ENCODE measurements at regions of chr2 and their contacts with region 1.

Region 1: DNA sequence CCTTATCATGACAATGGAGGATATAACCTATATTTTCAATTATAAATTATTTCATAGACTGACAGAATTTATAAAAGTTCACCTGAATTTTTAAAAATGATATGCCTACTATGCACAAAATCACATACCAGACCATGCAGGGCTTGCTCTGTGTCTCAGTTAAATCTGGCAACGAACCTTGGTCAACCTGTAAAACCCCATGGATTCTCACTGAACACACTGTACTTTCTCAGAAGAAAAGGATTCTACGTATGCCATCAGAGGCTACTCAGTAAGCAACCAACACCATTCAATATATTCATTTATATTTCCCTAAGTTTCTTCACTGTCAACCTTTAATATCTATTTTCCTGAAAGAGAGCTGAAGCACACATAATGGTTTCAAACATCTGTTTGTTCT is 52.4 kb downstream of the NRXN1 start:
- DNase-seq: no peak
- ATAC-seq: no peak
- H3K4me3 ChIP-seq: no peak overlapping the region
- H3K27ac ChIP-seq: no peak overlapping the region
- H3K4me1 ChIP-seq: no peaks in the 10 kb centered on the region
- H3K27me3 ChIP-seq: no peaks in the 10 kb centered on the region
- CTCF ChIP-seq: no peak

Region 2: DNA sequence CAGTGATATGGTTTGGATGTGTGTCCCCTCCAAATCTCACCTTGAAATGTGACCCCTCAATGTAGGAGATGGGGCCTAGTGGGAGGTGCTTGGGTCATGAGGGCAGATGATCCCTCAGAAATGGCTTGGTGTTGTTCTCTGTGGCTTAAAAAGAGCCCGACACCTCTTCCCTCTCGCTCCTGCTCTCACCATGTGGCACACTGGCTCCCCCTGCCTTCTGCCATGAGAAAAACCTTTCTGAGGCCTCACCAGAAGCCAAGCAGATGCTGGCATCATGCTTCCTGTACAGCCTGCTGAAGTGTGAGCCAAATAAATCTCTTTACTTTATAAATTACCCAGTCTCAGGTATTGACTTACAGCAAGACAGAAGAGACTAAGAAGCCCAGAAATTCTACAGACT is 304.6 kb before region 1 on chr2:
- CTCF ChIA-PET with region 1: interaction called, 12 read pairs
- POLR2A ChIA-PET with region 1: no interaction called
- in situ Hi-C with region 1: no loop called
- intact Hi-C with region 1: no loop called
- DNase-seq: no peak
- ATAC-seq: no peak
- H3K4me3 ChIP-seq: no peak overlapping the region
- H3K27ac ChIP-seq: no peak overlapping the region
- H3K4me1 ChIP-seq: no peaks in the 10 kb centered on the region
- H3K27me3 ChIP-seq: no peaks in the 10 kb centered on the region
- CTCF ChIP-seq: peak; percentile 19

Region 3: GRCh38 chr2:50820176-50820575 is 159.3 kb before region 1 on chr2:
- CTCF ChIA-PET with region 1: no interaction called
- POLR2A ChIA-PET with region 1: no interaction called
- in situ Hi-C with region 1: no loop called
- intact Hi-C with region 1: no loop called
- DNase-seq: no peak
- ATAC-seq: no peak
- H3K4me3 ChIP-seq: no peak overlapping the region
- H3K27ac ChIP-seq: no peak overlapping the region
- H3K4me1 ChIP-seq: no peaks in the 10 kb centered on the region
- H3K27me3 ChIP-seq: no peaks in the 10 kb centered on the region
- CTCF ChIP-seq: no peak

Region 4: GRCh38 chr2:50851886-50852285 is 127.6 kb before region 1 on chr2:
- CTCF ChIA-PET with region 1: no interaction called
- POLR2A ChIA-PET with region 1: no interaction called
- in situ Hi-C with region 1: no loop called
- intact Hi-C with region 1: no loop called
- DNase-seq: no peak
- ATAC-seq: no peak
- H3K4me3 ChIP-seq: no peak overlapping the region
- H3K27ac ChIP-seq: no peak overlapping the region
- H3K4me1 ChIP-seq: no peaks in the 10 kb centered on the region
- H3K27me3 ChIP-seq: no peaks in the 10 kb centered on the region
- CTCF ChIP-seq: no peak

Region 5: DNA sequence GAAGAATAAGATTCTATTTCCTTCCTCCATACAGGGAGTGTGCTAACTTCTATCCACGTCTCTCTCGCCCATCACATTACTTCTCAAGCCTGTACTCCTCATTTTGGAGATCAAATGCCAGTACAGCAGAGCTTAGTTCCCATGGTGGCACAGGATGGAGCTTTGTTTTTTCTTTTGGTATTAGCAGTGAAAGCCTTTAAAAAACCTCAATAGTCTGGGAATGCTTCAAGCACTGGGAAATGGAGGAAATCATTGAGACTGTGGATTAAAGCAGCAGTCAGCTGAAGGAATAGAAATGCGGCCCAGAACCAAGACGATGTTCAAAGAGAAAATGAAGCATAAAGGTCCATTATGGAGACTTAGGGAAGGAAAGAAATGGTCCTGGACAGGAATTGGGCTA is 49.8 kb before region 1 on chr2:
- CTCF ChIA-PET with region 1: no interaction called
- POLR2A ChIA-PET with region 1: no interaction called
- in situ Hi-C with region 1: no loop called
- intact Hi-C with region 1: no loop called
- DNase-seq: no peak
- ATAC-seq: no peak
- H3K4me3 ChIP-seq: no peak overlapping the region
- H3K27ac ChIP-seq: no peak overlapping the region
- H3K4me1 ChIP-seq: no peaks in the 10 kb centered on the region
- H3K27me3 ChIP-seq: no peaks in the 10 kb centered on the region
- CTCF ChIP-seq: no peak

Region 6: DNA sequence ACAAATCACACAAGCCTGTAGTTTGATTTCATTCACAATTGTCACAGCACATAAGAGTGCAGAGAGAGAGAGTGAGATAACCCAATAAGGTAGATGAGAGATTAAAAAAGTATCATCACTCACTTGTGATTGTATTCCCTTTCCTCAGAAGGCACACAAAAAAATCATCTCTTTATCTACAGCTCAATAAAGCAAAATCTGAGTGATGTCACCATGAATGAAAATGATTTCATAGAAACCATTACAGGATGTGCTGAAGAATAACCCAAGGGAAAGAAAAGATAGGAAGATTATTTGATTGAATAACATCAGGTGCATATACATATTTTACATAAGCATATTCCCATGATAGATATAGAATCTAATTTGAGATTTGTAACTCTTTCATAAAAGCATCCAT is 162.3 kb after region 1 on chr2:
- CTCF ChIA-PET with region 1: no interaction called
- POLR2A ChIA-PET with region 1: no interaction called
- in situ Hi-C with region 1: no loop called
- intact Hi-C with region 1: no loop called
- DNase-seq: no peak
- ATAC-seq: no peak
- H3K4me3 ChIP-seq: no peak overlapping the region
- H3K27ac ChIP-seq: no peak overlapping the region
- H3K4me1 ChIP-seq: no peaks in the 10 kb centered on the region
- H3K27me3 ChIP-seq: no peaks in the 10 kb centered on the region
- CTCF ChIP-seq: no peak